ENCODE measurements at regions of chr15 and their contacts with region 1.

Region 1: GRCh38 chr15:40108855-40109735 is at the start of gene BMF:
- DNase-seq: peak; percentile 96
- ATAC-seq: peak; percentile 68
- H3K4me3 ChIP-seq: peak within 1 kb of the TSS; percentile 57 to 88 (median 86)
- H3K4me3 Mint-ChIP-seq: peak within 1 kb of the TSS; percentile 90
- H3K27ac ChIP-seq: peak within 1 kb of the TSS; percentile 97 to 98
- H3K27ac Mint-ChIP-seq: peak within 1 kb of the TSS; percentile 97
- H3K4me1 ChIP-seq: peaks cover 47 to 56% of the 10 kb centered on the region in 2 donors
- H3K4me1 Mint-ChIP-seq: peaks cover 57% of the 10 kb centered on the region
- H3K27me3 ChIP-seq: no peaks in the 10 kb centered on the region
- H3K27me3 Mint-ChIP-seq: no peaks in the 10 kb centered on the region
- CTCF ChIP-seq: peak; percentile 29
- total RNA-seq, gene BMF: 343 and 344 TPM in 2 replicates

Region 2: DNA sequence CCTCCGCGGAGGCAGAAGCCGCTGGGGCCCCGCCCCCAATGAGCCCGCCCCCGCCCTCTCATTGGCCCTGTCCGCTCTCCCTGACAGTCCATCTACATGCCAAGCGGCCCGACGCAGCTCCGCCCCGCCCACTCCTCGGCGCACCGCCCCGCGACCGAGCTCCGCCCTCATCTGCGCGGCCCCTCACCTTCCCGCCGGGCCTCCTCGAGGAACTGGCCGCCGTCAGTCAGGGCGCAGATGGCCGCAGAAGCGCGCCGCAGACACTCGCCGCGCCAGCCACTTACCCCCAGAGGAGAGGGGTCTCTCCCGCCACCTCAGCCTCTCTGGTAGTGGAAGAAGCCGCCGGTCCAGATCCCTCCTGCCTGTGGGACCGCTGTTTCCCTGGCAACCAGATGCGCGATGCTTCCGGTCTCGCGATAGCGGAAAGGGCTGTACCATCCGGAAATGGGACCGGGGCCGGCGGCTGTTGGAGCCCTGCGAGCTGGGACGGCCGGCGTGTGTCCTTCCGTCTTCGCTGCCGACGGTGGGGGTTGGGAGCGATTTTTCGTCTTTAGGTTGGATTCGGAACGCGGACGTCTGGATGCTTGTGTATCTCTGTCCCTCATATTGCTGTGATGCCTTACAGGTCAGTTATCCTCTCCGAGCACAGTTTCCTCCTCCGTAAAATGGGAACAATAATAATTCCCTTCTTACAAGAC is 326.5 kb before region 1 on chr15 and contains the start of gene FSIP1:
- CTCF ChIA-PET with region 1: interaction called, 5 read pairs
- POLR2A ChIA-PET with region 1: interaction called, 4 read pairs
- intact Hi-C with region 1: loop called (anchors 2 kb)
- DNase-seq: peak; percentile 98
- ATAC-seq: peak; percentile 99
- H3K4me3 ChIP-seq: peak within 1 kb of the TSS; percentile 81 to 98 (median 91)
- H3K4me3 Mint-ChIP-seq: peak within 1 kb of the TSS; percentile 85
- H3K27ac ChIP-seq: peak within 1 kb of the TSS; percentile 63 to 83
- H3K27ac Mint-ChIP-seq: peak within 1 kb of the TSS; percentile 97
- H3K4me1 ChIP-seq: peaks cover 17 to 18% of the 10 kb centered on the region in 2 donors
- H3K4me1 Mint-ChIP-seq: peaks cover 43% of the 10 kb centered on the region
- H3K27me3 ChIP-seq: peaks cover 0 to 5% (median under 1%) of the 10 kb centered on the region in 4 experiments
- H3K27me3 Mint-ChIP-seq: peaks cover 5% of the 10 kb centered on the region
- CTCF ChIP-seq: no peak
- total RNA-seq, gene FSIP1: 0.44 and 0.49 TPM in 2 replicates

Region 3: GRCh38 chr15:40038638-40039543 is 70.2 kb before region 1 on chr15 and contains the start of gene SRP14:
- CTCF ChIA-PET with region 1: interaction called, 934 read pairs
- POLR2A ChIA-PET with region 1: interaction called, 324 read pairs
- intact Hi-C with region 1: loop called (anchors 1 kb)
- DNase-seq: peak; percentile 95
- ATAC-seq: peak; percentile 96
- H3K4me3 ChIP-seq: peak within 1 kb of the TSS; percentile 72 to 99 (median 96)
- H3K4me3 Mint-ChIP-seq: peak within 1 kb of the TSS; percentile 97
- H3K27ac ChIP-seq: peak within 1 kb of the TSS; percentile 93 to 95
- H3K27ac Mint-ChIP-seq: peak within 1 kb of the TSS; percentile 92
- H3K4me1 ChIP-seq: peaks cover 14 to 21% of the 10 kb centered on the region in 2 donors
- H3K4me1 Mint-ChIP-seq: peaks cover 28% of the 10 kb centered on the region
- H3K27me3 ChIP-seq: no peaks in the 10 kb centered on the region
- H3K27me3 Mint-ChIP-seq: no peaks in the 10 kb centered on the region
- CTCF ChIP-seq: peak; percentile 23
- total RNA-seq, gene SRP14: 112 and 120 TPM in 2 replicates

Region 4: DNA sequence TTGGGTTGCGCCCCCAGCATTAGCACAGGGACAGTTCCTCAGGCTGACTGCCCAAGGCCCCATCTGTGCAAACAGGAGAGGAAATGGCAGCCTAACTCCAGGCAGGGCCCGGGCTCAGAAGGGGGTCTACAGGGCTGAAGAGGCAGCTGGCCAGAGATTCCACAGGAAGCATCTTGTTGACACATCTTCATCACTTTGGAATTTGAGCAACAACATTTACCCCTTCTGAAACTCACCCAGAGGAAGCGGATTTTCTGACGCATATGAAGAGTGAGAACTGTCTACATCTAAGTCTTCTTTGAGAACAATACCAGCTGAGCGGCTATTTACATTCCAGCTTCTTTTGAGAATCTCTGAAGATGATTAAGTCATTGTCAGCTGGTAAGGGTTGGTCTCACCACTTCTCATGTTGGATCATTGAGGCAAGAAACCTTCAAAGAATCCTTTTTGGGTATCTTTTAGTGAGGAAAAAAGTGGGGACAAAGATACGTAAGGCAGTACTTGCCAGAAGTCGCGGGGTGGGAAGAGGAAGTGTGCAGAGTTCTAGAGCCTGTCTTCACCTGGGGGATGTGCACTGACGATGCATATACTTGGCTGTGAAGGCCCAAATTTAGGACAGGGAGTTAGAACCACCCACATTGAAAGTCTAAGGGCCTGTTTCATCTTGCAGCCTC is 44.7 kb before region 1 on chr15:
- CTCF ChIA-PET with region 1: interaction called, 61 read pairs
- POLR2A ChIA-PET with region 1: interaction called, 43 read pairs
- intact Hi-C with region 1: loop called (anchors 1 kb)
- DNase-seq: peak; percentile 65
- ATAC-seq: peak; percentile 42
- H3K4me3 ChIP-seq: no peak overlapping the region
- H3K4me3 Mint-ChIP-seq: peak overlapping the region; percentile 62
- H3K27ac ChIP-seq: peak overlapping the region; percentile 58 to 80
- H3K27ac Mint-ChIP-seq: peak overlapping the region; percentile 93
- H3K4me1 ChIP-seq: peaks cover 32 to 36% of the 10 kb centered on the region in 2 donors
- H3K4me1 Mint-ChIP-seq: peaks cover 24% of the 10 kb centered on the region
- H3K27me3 ChIP-seq: no peaks in the 10 kb centered on the region
- H3K27me3 Mint-ChIP-seq: no peaks in the 10 kb centered on the region
- CTCF ChIP-seq: no peak

Region 5: GRCh38 chr15:40081691-40082194 is 27.4 kb before region 1 on chr15:
- CTCF ChIA-PET with region 1: interaction called, 489 read pairs
- POLR2A ChIA-PET with region 1: interaction called, 13 read pairs
- intact Hi-C with region 1: loop called (anchors 1 kb)
- DNase-seq: no peak
- ATAC-seq: no peak
- H3K4me3 ChIP-seq: peak overlapping the region; percentile 1 to 66 (median 14)
- H3K4me3 Mint-ChIP-seq: peak overlapping the region; percentile 74
- H3K27ac ChIP-seq: peak overlapping the region; percentile 81 to 82
- H3K27ac Mint-ChIP-seq: peak overlapping the region; percentile 96
- H3K4me1 ChIP-seq: peaks cover 37 to 49% of the 10 kb centered on the region in 2 donors
- H3K4me1 Mint-ChIP-seq: peaks cover 58% of the 10 kb centered on the region
- H3K27me3 ChIP-seq: no peaks in the 10 kb centered on the region
- H3K27me3 Mint-ChIP-seq: no peaks in the 10 kb centered on the region
- CTCF ChIP-seq: no peak

Region 6: GRCh38 chr15:40160689-40161688 is 51.9 kb after region 1 on chr15 and contains the start of gene BUB1B:
- CTCF ChIA-PET with region 1: interaction called, 9 read pairs
- POLR2A ChIA-PET with region 1: interaction called, 3 read pairs
- intact Hi-C with region 1: loop called (anchors 1 kb)
- DNase-seq: peak; percentile 96
- ATAC-seq: peak; percentile 97
- H3K4me3 ChIP-seq: peak within 1 kb of the TSS; percentile 56 to 77 (median 71)
- H3K4me3 Mint-ChIP-seq: no peak within 1 kb of the TSS
- H3K27ac ChIP-seq: no peak within 1 kb of the TSS
- H3K27ac Mint-ChIP-seq: no peak within 1 kb of the TSS
- H3K4me1 ChIP-seq: peaks cover 10 to 14% of the 10 kb centered on the region in 2 donors
- H3K4me1 Mint-ChIP-seq: peaks cover 7% of the 10 kb centered on the region
- H3K27me3 ChIP-seq: no peaks in the 10 kb centered on the region
- H3K27me3 Mint-ChIP-seq: no peaks in the 10 kb centered on the region
- CTCF ChIP-seq: no peak
- total RNA-seq, gene BUB1B: 2.9 and 4.4 TPM in 2 replicates

Region 7: GRCh38 chr15:40323239-40323952 is 214.3 kb after region 1 on chr15 and contains the start of gene INAFM2:
- CTCF ChIA-PET with region 1: interaction called, 4 read pairs
- POLR2A ChIA-PET with region 1: no interaction called
- intact Hi-C with region 1: loop called (anchors 5 kb)
- DNase-seq: peak; percentile 97
- ATAC-seq: peak; percentile 89
- H3K4me3 ChIP-seq: peak within 1 kb of the TSS; percentile 25 to 71 (median 59)
- H3K4me3 Mint-ChIP-seq: peak within 1 kb of the TSS; percentile 85
- H3K27ac ChIP-seq: peak within 1 kb of the TSS in 1 of 2 donors; percentile 10
- H3K27ac Mint-ChIP-seq: no peak within 1 kb of the TSS
- H3K4me1 ChIP-seq: peaks cover 21 to 26% of the 10 kb centered on the region in 2 donors
- H3K4me1 Mint-ChIP-seq: peaks cover 29% of the 10 kb centered on the region
- H3K27me3 ChIP-seq: peaks cover 0 to 2% (median 0%) of the 10 kb centered on the region in 4 experiments
- H3K27me3 Mint-ChIP-seq: no peaks in the 10 kb centered on the region
- CTCF ChIP-seq: peak; percentile 75
- total RNA-seq, gene INAFM2: 5.3 and 7.0 TPM in 2 replicates

Measured in B cell (primary cell).